ENCODE measurements at regions of chr1 and their contacts with region 1.

Region 1: DNA sequence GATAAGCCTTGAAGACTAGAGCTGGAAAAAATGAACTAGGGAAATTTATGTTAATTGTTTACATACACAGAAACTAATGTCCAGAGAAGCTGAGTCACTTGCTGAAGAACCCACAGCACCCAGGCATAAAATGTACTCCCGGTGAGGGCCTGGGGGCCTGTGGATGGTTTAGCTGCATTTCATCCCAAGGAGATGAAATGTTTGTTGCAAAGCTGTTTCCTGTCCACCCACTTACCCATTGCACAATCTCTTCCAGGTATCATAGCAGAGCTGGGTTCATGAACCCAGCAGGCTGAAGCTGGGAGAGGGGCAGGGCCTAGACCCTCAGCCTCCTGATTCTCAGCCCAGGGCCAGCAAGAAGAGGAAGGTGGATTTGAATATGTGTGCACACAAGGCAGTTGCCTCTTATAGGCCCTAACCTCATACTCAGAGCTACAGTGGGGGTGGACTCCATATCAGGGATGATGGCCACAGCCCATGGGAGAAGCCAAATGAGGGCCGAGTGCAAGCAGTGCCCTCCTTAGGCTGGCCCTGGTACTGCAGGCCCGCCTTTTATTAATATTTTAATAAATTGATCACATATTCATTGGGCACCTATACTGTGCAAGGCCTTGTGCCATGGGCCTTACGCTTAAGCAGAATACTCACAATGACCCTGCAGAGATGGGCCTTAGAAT is 110.8 kb downstream of the LACTBL1 start:
- DNase-seq: peak in 1 of 2 experiments; percentile 78
- H3K4me3 ChIP-seq: no peak overlapping the region
- H3K27ac ChIP-seq: no peak overlapping the region
- H3K4me1 ChIP-seq: peaks cover 0 to 3% (median 0%) of the 10 kb centered on the region in 4 experiments; a peak in 3 of 7 replicates
- H3K27me3 ChIP-seq: no peaks in the 10 kb centered on the region; a peak in 1 of 7 replicates
- CTCF ChIP-seq: peak; percentile 71 to 80 (median 80)
- EP300 ChIP-seq: no peak
- POLR2A ChIP-seq: no peak
- RAD21 ChIP-seq: peak; percentile 79 to 88

Region 2: GRCh38 chr1:22704440-22705067 is 157.3 kb before region 1 on chr1:
- CTCF ChIA-PET with region 1: interaction called, 78 read pairs
- POLR2A ChIA-PET with region 1: no interaction called
- DNase-seq: peak; percentile 29 to 88
- H3K4me3 ChIP-seq: no peak overlapping the region
- H3K27ac ChIP-seq: no peak overlapping the region
- H3K4me1 ChIP-seq: peaks cover 0 to 4% (median 0%) of the 10 kb centered on the region in 4 experiments; a peak in 1 of 7 replicates
- H3K27me3 ChIP-seq: peaks cover 0 to 3% (median 1%) of the 10 kb centered on the region in 4 experiments; a peak in 3 of 7 replicates
- CTCF ChIP-seq: peak; percentile 71 to 92 (median 91)
- EP300 ChIP-seq: no peak
- POLR2A ChIP-seq: no peak
- RAD21 ChIP-seq: peak; percentile 84 to 87

Region 3: DNA sequence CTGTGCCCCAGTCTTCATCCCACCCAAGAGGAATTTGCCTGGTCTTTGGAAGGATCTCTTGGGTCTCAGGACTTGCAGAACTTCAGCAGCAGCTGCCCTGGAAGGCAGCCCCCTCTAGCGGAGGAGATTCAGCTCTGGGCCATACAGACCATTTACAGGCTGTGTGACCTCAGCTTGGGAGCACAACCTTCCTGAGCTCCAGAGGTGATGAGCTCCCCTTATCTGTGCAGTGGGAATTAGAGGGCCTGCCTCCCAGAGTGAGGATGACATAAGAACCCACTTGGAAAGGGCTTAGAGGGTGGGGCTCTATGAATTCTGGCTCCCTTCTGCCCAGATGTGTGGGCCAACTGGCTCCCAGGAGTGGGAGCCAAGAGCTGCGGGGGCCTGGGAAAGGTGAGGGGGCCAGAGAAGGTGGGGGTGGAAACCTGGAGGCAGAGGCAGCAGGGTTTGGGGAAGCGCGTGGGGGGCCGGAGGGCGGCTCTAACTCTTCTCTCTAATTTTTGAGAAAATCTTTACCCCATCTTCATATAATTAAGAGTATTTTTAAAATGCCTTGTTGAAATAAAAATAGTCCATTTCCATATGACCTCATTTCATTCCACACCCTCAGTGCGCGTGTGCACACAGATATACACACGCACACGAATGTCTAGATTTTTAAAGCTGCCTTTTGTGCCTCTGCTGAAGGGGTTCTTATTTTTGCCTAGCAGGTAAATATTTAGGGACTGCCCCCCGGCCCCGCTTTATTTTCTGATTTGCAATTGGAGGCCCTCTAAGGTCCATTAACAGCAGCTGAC is 129.8 kb before region 1 on chr1:
- CTCF ChIA-PET with region 1: interaction called, 27 read pairs
- POLR2A ChIA-PET with region 1: no interaction called
- DNase-seq: no peak
- H3K4me3 ChIP-seq: no peak overlapping the region
- H3K27ac ChIP-seq: no peak overlapping the region
- H3K4me1 ChIP-seq: peaks cover 0 to 12% (median 5%) of the 10 kb centered on the region in 4 experiments; a peak in 5 of 7 replicates
- H3K27me3 ChIP-seq: no peaks in the 10 kb centered on the region
- CTCF ChIP-seq: peak; percentile 66 to 82 (median 68)
- EP300 ChIP-seq: no peak
- POLR2A ChIP-seq: no peak
- RAD21 ChIP-seq: peak; percentile 62 to 78

Region 4: GRCh38 chr1:22773981-22774832 is 87.7 kb before region 1 on chr1:
- CTCF ChIA-PET with region 1: interaction called, 17 read pairs
- POLR2A ChIA-PET with region 1: no interaction called
- DNase-seq: no peak
- H3K4me3 ChIP-seq: no peak overlapping the region
- H3K27ac ChIP-seq: no peak overlapping the region
- H3K4me1 ChIP-seq: peaks cover 0 to 7% (median 3%) of the 10 kb centered on the region in 4 experiments; a peak in 2 of 7 replicates
- H3K27me3 ChIP-seq: no peaks in the 10 kb centered on the region
- CTCF ChIP-seq: no peak
- EP300 ChIP-seq: no peak
- POLR2A ChIP-seq: no peak
- RAD21 ChIP-seq: no peak

Region 5: DNA sequence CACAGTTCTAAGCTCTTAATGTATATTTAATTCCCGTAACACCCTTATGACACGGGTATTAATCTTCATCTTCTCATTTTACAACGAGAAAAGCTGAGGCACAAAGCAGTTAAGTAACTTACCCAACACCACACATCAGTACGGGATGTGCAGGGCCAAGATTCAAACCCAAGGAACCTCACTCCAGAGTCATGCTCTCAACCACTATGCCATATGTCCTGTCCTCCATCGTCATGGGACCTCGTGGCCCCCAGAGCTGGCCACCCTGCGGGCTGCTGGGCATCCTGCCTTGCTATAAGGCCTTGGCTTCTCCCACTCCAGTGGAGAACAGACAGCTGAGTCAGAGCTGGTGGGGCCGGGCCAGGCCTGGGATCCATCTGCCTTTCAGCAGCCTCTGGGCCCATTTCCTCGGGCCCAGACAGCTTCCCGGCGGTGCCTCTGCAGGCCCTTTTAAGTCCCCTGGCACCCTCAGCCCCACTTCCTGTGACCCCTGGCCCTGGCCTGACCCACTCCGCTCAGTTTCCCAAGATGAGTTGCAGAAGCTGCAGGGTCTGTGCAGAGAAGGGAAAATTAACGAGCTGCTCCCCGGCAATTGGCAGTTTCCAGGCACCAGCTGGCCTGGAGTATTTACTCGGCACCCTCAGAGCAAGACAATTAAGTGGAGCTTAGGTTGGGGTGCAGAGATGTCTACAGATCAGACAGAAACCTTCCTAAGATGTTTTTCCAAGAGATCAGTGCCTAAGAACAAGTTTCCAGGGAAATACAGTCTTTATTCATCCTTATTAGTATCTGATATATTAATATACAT is 53.0 kb before region 1 on chr1:
- CTCF ChIA-PET with region 1: interaction called, 17 read pairs
- POLR2A ChIA-PET with region 1: no interaction called
- DNase-seq: no peak
- H3K4me3 ChIP-seq: no peak overlapping the region
- H3K27ac ChIP-seq: no peak overlapping the region
- H3K4me1 ChIP-seq: peaks cover 9 to 32% (median 18%) of the 10 kb centered on the region in 4 experiments
- H3K27me3 ChIP-seq: no peaks in the 10 kb centered on the region
- CTCF ChIP-seq: no peak
- EP300 ChIP-seq: no peak
- POLR2A ChIP-seq: no peak
- RAD21 ChIP-seq: no peak

Region 6: GRCh38 chr1:22845398-22845935 is 16.4 kb before region 1 on chr1:
- CTCF ChIA-PET with region 1: interaction called, 132 read pairs
- POLR2A ChIA-PET with region 1: no interaction called
- DNase-seq: no peak
- H3K4me3 ChIP-seq: no peak overlapping the region
- H3K27ac ChIP-seq: no peak overlapping the region
- H3K4me1 ChIP-seq: peaks cover 0 to 8% (median 5%) of the 10 kb centered on the region in 4 experiments; a peak in 4 of 7 replicates
- H3K27me3 ChIP-seq: no peaks in the 10 kb centered on the region
- CTCF ChIP-seq: no peak
- EP300 ChIP-seq: no peak
- POLR2A ChIP-seq: no peak
- RAD21 ChIP-seq: no peak

Region 7: GRCh38 chr1:22916471-22916820 is 54.5 kb after region 1 on chr1:
- CTCF ChIA-PET with region 1: interaction called, 14 read pairs
- POLR2A ChIA-PET with region 1: no interaction called
- DNase-seq: no peak
- H3K4me3 ChIP-seq: no peak overlapping the region
- H3K27ac ChIP-seq: no peak overlapping the region
- H3K4me1 ChIP-seq: peaks cover 0 to 3% (median 0%) of the 10 kb centered on the region in 4 experiments; a peak in 2 of 7 replicates
- H3K27me3 ChIP-seq: no peaks in the 10 kb centered on the region
- CTCF ChIP-seq: no peak
- EP300 ChIP-seq: no peak
- POLR2A ChIP-seq: no peak
- RAD21 ChIP-seq: no peak

Region 8: DNA sequence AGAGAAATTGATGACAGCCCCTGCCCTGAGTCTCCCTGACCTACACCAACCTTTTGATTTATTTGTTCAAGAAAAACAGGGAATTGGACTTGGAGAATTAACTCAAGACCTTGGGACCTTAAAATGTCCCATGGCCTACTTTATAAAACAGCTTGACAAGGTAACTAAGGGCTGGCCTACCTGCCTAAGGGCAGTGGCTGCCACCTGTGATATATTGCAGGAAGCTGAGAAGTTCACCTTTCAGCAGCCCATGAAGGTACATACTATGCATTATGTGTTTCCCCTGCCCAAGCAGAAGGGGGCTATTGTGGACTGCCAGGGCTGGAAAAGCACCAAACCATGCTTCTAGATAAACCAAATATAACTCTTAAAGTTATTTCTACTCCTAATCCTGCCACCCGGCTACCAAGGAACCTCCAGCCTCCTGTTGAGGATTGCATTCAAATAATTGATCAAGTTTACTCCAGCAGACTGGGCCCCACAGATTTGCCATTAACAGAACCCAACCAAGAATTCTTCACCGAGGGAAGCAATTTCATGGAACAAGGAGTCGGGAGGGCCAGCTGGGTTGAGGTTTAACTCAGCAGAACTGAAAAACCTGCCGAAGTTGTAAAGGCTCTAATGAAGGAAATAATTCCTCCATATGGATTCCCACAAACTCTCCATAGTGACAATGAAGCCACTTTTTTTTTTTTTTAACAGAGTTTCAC is 82.6 kb after region 1 on chr1:
- CTCF ChIA-PET with region 1: no interaction called
- POLR2A ChIA-PET with region 1: no interaction called
- DNase-seq: no peak
- H3K4me3 ChIP-seq: no peak overlapping the region
- H3K27ac ChIP-seq: no peak overlapping the region
- H3K4me1 ChIP-seq: no peaks in the 10 kb centered on the region
- H3K27me3 ChIP-seq: no peaks in the 10 kb centered on the region
- CTCF ChIP-seq: no peak
- EP300 ChIP-seq: no peak
- POLR2A ChIP-seq: no peak
- RAD21 ChIP-seq: no peak

Region 9: GRCh38 chr1:22963044-22963677 is 101.3 kb after region 1 on chr1:
- CTCF ChIA-PET with region 1: no interaction called
- POLR2A ChIA-PET with region 1: no interaction called
- DNase-seq: no peak
- H3K4me3 ChIP-seq: no peak overlapping the region
- H3K27ac ChIP-seq: no peak overlapping the region
- H3K4me1 ChIP-seq: no peaks in the 10 kb centered on the region
- H3K27me3 ChIP-seq: peaks cover 0 to 2% (median 0%) of the 10 kb centered on the region in 4 experiments; a peak in 2 of 7 replicates
- CTCF ChIP-seq: no peak
- EP300 ChIP-seq: no peak
- POLR2A ChIP-seq: no peak
- RAD21 ChIP-seq: no peak

Region 10: DNA sequence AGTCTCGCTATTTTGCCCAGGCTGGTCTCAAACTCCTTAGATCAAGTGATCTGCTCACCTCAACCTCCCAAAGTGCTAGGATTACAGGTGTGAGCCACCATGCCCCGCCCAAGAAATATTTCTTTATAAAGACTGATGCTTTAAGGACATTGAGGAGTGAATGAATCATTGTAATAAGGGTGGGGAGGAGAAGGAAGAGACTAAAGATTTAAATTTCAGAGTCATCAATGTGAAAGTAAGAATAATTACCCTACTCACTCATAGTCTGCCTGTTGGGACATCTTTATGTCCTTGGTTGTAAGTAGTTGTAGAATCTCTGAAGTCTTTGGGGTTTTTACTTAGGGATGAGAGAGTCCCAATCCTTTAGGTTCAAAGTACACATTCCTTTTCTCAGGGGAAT is 164.7 kb after region 1 on chr1:
- CTCF ChIA-PET with region 1: no interaction called
- POLR2A ChIA-PET with region 1: no interaction called
- DNase-seq: no peak
- H3K4me3 ChIP-seq: no peak overlapping the region
- H3K27ac ChIP-seq: no peak overlapping the region
- H3K4me1 ChIP-seq: no peaks in the 10 kb centered on the region
- H3K27me3 ChIP-seq: no peaks in the 10 kb centered on the region
- CTCF ChIP-seq: no peak
- EP300 ChIP-seq: no peak
- POLR2A ChIP-seq: no peak
- RAD21 ChIP-seq: no peak

Measured in H1 (cell line).